ENCODE measurements at regions of chr3 and their contacts with region 1.

Region 1: DNA sequence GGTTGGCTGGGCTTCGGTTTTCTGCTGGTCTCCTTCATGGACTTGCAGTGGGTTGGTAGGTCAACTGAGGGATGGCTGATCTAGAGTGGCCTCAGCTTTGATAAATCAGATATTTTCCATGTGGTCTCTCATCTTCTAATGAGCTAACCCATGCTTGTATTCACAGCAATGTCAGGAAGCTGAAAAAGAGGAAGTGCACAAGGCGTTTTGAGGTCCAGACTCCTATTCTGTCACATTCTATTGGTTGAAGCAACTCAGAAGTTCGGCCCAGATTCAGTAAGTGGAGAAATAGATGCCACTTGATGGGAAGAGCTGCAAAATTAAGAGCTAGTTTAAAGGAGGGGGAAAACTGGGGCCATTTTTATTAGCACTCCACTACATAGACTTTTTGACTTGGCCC is 361.2 kb downstream of the DIPK2A start:
- DNase-seq: no peak
- H3K4me3 ChIP-seq: no peak overlapping the region
- H3K27ac ChIP-seq: no peak overlapping the region
- H3K27me3 ChIP-seq: no peaks in the 10 kb centered on the region
- CTCF ChIP-seq: no peak

Region 2: GRCh38 chr3:144270100-144270499 is 62.8 kb before region 1 on chr3:
- intact Hi-C with region 1: loop called in 1 of 2 experiments (anchors 10 kb)
- DNase-seq: peak in 2 of 10 donors; percentile 19 to 40
- H3K4me3 ChIP-seq: no peak overlapping the region
- H3K27ac ChIP-seq: no peak overlapping the region
- H3K27me3 ChIP-seq: no peaks in the 10 kb centered on the region
- CTCF ChIP-seq: no peak

Region 3: DNA sequence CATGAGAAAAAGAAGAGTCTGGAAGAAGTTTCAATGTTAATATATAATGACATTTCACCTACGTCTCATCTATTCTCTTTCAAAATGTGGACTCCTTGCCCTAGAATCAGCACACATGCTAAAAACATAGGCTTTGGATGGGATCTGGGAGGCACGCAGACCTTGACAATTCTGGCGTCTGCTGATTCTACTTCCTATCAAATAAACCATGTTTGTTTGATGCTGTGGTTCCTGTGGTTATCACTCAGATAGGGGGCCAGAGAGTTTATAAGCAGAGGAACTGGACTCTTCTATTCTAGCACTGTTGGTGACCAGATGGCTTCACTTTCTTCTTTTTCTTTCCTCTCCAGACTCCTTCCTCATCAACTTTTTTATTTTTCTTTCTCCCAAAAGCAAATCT is 24.5 kb before region 1 on chr3:
- intact Hi-C with region 1: loop called in 1 of 2 experiments (anchors 1 kb)
- DNase-seq: no peak
- H3K4me3 ChIP-seq: no peak overlapping the region
- H3K27ac ChIP-seq: no peak overlapping the region
- H3K27me3 ChIP-seq: no peaks in the 10 kb centered on the region
- CTCF ChIP-seq: no peak

Measured in dorsolateral prefrontal cortex (tissue), 120 donors.